Heart right ventricle (tissue), 16 donors: ENCODE measurements at regions of chr19 and their contacts with region 1.

Region 1: GRCh38 chr19:40716655-40717324 is at the starts of genes COQ8B and ITPKC:
- DNase-seq: peak; percentile 100
- ATAC-seq: peak; percentile 77 to 87 (median 84)
- H3K4me3 ChIP-seq: peak within 1 kb of the TSS; percentile 64 to 89 (median 78)
- H3K27ac ChIP-seq: peak within 1 kb of the TSS; percentile 87 to 98 (median 97)
- H3K4me1 ChIP-seq: peaks cover 16 to 83% (median 64%) of the 10 kb centered on the region in 9 donors
- H3K27me3 ChIP-seq: no peaks in the 10 kb centered on the region
- CTCF ChIP-seq: peak in 5 of 9 donors; percentile 16 to 44 (median 26)
- total RNA-seq, gene COQ8B: 17.9 to 34.3 (median 27.3) TPM
- total RNA-seq, gene ITPKC: 6.2 to 15.3 (median 9.1) TPM

Region 2: GRCh38 chr19:40444192-40445028 is 272.4 kb before region 1 on chr19 and contains the start of gene SERTAD3:
- intact Hi-C with region 1: no loop called
- DNase-seq: peak; percentile 97
- ATAC-seq: peak; percentile 82 to 90 (median 88)
- H3K4me3 ChIP-seq: peak within 1 kb of the TSS; percentile 70 to 96 (median 85)
- H3K27ac ChIP-seq: peak within 1 kb of the TSS; percentile 80 to 100 (median 97)
- H3K4me1 ChIP-seq: peaks cover 10 to 38% (median 27%) of the 10 kb centered on the region in 9 donors
- H3K27me3 ChIP-seq: no peaks in the 10 kb centered on the region
- CTCF ChIP-seq: peak in 6 of 9 donors; percentile 15 to 51 (median 39)
- total RNA-seq, gene SERTAD3: 19.4 to 37.5 (median 27.4) TPM

Region 3: GRCh38 chr19:40750059-40750873 is 33.5 kb after region 1 on chr19 and contains the start of gene ACTMAP:
- intact Hi-C with region 1: loop called in 6 of 10 experiments (anchors 1 to 5 kb)
- DNase-seq: peak; percentile 98 to 100
- ATAC-seq: peak; percentile 95 to 98 (median 97)
- H3K4me3 ChIP-seq: peak within 1 kb of the TSS; percentile 56 to 92 (median 79)
- H3K27ac ChIP-seq: peak within 1 kb of the TSS; percentile 92 to 99 (median 95)
- H3K4me1 ChIP-seq: peaks cover 15 to 66% (median 47%) of the 10 kb centered on the region in 9 donors
- H3K27me3 ChIP-seq: no peaks in the 10 kb centered on the region
- CTCF ChIP-seq: no peak
- total RNA-seq, gene ACTMAP: 5.3 to 11.4 (median 8.4) TPM

Region 4: DNA sequence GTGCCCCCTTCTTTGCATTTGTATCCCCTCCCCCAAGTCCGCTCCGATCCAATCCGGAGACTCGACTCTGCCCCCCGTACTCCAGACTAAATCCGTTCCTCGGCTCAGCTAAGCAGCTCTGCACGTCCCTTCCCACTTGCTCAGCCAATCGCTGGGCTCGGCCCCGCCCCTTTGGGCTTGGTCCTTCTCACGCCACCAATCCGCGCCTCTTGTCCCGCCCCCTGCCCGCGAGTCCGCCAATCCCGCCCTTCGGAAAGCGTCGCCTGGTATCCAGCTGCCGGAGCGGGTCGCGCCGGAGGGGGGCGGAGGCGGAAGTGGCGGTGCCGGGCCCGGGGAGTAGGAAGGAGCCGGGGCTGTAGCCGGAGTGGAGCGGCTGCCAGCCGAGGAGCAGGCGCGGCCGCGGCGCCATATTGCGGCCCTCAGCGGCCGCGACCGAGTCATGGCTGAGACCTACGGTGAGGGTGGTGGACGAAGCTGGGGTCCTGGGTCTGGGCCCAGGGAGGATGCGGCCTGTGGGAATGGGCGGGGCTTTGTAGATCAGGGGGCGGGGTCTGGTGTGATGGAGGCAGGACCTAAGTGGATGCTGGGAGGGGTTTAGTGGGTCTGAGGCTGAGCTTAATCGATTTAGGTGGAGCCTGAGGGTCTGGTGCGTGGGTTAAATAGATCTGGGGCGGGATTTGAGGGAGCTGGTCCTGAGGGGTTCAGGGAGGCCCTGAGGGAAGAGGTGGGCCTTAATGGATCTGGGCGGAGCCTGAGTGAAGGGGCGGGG is 61.3 kb after region 1 on chr19 and contains the start of gene RAB4B:
- intact Hi-C with region 1: loop called in 1 of 10 experiments (anchors 2 kb)
- DNase-seq: peak; percentile 100
- ATAC-seq: peak; percentile 95 to 98 (median 97)
- H3K4me3 ChIP-seq: peak within 1 kb of the TSS; percentile 43 to 84 (median 74)
- H3K27ac ChIP-seq: peak within 1 kb of the TSS; percentile 89 to 100 (median 96)
- H3K4me1 ChIP-seq: peaks cover 7 to 25% (median 14%) of the 10 kb centered on the region in 9 donors
- H3K27me3 ChIP-seq: no peaks in the 10 kb centered on the region
- CTCF ChIP-seq: peak in 1 of 9 donors; percentile 22
- total RNA-seq, gene RAB4B: 11.0 to 25.2 (median 13.5) TPM

Region 5: DNA sequence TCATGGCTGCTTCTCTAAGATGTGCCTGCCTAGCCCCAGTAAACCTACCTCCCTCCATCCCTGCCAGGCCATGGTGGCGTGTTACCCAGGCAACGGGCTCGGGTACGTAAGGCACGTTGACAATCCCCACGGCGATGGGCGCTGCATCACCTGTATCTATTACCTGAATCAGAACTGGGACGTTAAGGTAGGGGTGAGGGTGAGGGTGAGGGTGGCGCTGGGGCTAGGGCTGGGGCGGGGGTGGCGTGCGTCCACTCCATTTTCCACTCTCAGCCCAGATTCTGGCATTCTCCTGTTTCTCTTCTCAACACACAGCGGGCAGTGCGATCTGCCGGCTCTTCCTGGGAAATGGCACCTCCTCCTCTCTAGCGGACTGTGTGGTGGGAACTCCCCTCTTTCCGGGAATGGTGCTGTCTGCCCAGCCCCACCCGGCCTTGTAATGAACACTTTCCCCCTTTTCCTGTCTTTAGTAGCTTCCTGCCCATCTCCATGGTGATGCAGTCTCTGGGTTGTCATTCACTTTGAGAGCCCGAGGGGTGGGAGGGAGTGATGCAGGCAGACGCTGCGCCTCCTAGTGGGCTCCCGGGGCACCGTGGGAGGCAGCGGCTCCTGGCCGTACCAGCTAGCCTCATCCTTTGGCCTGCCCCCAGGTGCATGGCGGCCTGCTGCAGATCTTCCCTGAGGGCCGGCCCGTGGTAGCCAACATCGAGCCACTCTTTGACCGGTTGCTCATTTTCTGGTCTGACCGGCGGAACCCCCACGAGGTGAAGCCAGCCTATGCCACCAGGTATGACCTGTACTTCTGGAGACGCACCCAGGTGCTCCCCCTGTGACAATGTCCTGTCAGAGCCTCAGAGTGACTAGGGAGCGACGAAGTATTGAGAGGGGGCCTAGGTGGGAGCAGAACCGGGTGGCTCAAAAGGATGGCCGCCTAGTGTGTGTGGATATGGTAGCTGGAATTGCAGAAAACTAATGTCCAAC is 90.0 kb after region 1 on chr19:
- intact Hi-C with region 1: loop called in 2 of 10 experiments (anchors 5 kb)
- DNase-seq: peak; percentile 80 to 92
- ATAC-seq: peak; percentile 30 to 72 (median 58)
- H3K4me3 ChIP-seq: peak overlapping the region in 6 of 10 donors; percentile 2 to 32 (median 24)
- H3K27ac ChIP-seq: peak overlapping the region; percentile 42 to 99 (median 94)
- H3K4me1 ChIP-seq: peaks cover 47 to 93% (median 89%) of the 10 kb centered on the region in 9 donors
- H3K27me3 ChIP-seq: no peaks in the 10 kb centered on the region
- CTCF ChIP-seq: peak; percentile 61 to 94 (median 87)